H1 (cell line): ENCODE measurements at regions of chr22 and their contacts with region 1.

Region 1: DNA sequence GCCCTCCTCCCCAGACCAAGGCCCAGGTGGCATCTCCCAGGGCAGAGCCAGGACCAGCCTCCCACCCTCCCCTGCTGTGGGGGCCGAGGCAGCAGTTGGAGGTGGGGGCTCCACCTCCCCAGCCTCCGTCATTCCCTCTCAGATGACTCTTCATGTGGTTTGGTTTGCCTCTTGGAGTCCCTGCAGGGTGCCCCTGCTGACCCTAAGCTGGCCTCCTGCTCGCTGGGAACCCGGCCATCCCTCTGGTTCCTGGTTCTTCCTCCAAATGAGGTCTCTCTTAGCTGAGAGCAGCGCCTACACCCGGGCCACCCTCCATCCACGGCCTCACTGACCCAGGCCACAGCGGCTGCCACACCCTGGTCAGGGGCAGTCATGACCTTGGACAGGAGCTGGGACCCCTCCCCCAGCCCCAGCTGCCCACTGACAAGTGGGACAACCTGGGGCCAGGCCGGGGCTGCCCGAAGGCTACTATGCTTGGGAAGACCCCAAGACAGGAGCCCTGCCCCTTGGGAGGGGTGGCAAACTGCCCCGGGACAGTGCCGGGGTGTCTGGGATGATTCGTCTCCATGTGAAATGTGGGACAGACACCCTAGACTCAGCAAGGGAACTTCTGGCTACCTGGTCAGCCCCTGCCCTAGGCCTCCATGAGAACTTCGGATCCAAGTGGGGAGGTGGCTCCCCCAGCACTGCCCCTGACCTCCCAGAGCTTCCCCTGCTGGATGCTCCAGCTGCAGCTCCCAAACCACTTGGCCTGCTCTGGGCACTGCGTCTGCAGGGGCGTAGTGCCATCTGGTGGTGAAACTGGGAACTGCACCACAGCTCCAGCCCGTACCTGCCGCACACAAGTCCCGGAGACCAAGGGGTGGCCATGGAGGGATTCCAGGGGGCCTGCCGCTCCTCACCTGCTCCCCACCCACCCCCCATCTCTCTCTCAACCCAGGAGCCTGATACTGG is 194.5 kb downstream of the IGLL1 start:
- DNase-seq: peak; percentile 80 to 98
- H3K4me3 ChIP-seq: no peak overlapping the region
- H3K27ac ChIP-seq: no peak overlapping the region
- H3K4me1 ChIP-seq: peaks cover 0 to 10% (median 4%) of the 10 kb centered on the region in 4 experiments; a peak in 5 of 7 replicates
- H3K27me3 ChIP-seq: peaks cover 0 to 3% (median 0%) of the 10 kb centered on the region in 4 experiments; a peak in 1 of 7 replicates
- CTCF ChIP-seq: peak; percentile 97 to 99 (median 99)
- EP300 ChIP-seq: no peak
- POLR2A ChIP-seq: no peak
- RAD21 ChIP-seq: peak; percentile 97 to 99

Region 2: GRCh38 chr22:23315341-23315917 is 70.1 kb before region 1 on chr22:
- CTCF ChIA-PET with region 1: interaction called, 25 read pairs
- POLR2A ChIA-PET with region 1: no interaction called
- DNase-seq: peak; percentile 13 to 87
- H3K4me3 ChIP-seq: no peak overlapping the region
- H3K27ac ChIP-seq: no peak overlapping the region
- H3K4me1 ChIP-seq: peaks cover 0 to 2% (median 0%) of the 10 kb centered on the region in 4 experiments; a peak in 1 of 7 replicates
- H3K27me3 ChIP-seq: no peaks in the 10 kb centered on the region
- CTCF ChIP-seq: peak; percentile 30 to 68 (median 59)
- EP300 ChIP-seq: no peak
- POLR2A ChIP-seq: no peak
- RAD21 ChIP-seq: peak; percentile 74 to 79

Region 3: GRCh38 chr22:23322547-23322946 is 63.0 kb before region 1 on chr22:
- CTCF ChIA-PET with region 1: interaction called, 25 read pairs
- POLR2A ChIA-PET with region 1: no interaction called
- DNase-seq: peak in 1 of 2 experiments; percentile 17
- H3K4me3 ChIP-seq: no peak overlapping the region
- H3K27ac ChIP-seq: no peak overlapping the region
- H3K4me1 ChIP-seq: peaks cover 0 to 3% (median 0%) of the 10 kb centered on the region in 4 experiments; a peak in 1 of 7 replicates
- H3K27me3 ChIP-seq: no peaks in the 10 kb centered on the region
- CTCF ChIP-seq: peak; percentile 36 to 57 (median 36)
- EP300 ChIP-seq: no peak
- POLR2A ChIP-seq: no peak
- RAD21 ChIP-seq: peak; percentile 48 to 66

Region 4: GRCh38 chr22:23368656-23369417 is 16.7 kb before region 1 on chr22:
- CTCF ChIA-PET with region 1: interaction called, 13 read pairs
- POLR2A ChIA-PET with region 1: interaction called, 3 read pairs
- DNase-seq: peak in 1 of 2 experiments; percentile 22
- H3K4me3 ChIP-seq: no peak overlapping the region
- H3K27ac ChIP-seq: no peak overlapping the region
- H3K4me1 ChIP-seq: peaks cover 0 to 3% (median 2%) of the 10 kb centered on the region in 4 experiments; a peak in 2 of 7 replicates
- H3K27me3 ChIP-seq: peaks cover 58 to 85% (median 77%) of the 10 kb centered on the region in 4 experiments
- CTCF ChIP-seq: no peak
- EP300 ChIP-seq: no peak
- POLR2A ChIP-seq: no peak
- RAD21 ChIP-seq: no peak

Region 5: GRCh38 chr22:23450434-23450795 is 64.8 kb after region 1 on chr22:
- CTCF ChIA-PET with region 1: no interaction called
- POLR2A ChIA-PET with region 1: no interaction called
- DNase-seq: no peak
- H3K4me3 ChIP-seq: no peak overlapping the region
- H3K27ac ChIP-seq: no peak overlapping the region
- H3K4me1 ChIP-seq: no peaks in the 10 kb centered on the region
- H3K27me3 ChIP-seq: no peaks in the 10 kb centered on the region
- CTCF ChIP-seq: no peak
- EP300 ChIP-seq: no peak
- POLR2A ChIP-seq: no peak
- RAD21 ChIP-seq: no peak

Region 6: DNA sequence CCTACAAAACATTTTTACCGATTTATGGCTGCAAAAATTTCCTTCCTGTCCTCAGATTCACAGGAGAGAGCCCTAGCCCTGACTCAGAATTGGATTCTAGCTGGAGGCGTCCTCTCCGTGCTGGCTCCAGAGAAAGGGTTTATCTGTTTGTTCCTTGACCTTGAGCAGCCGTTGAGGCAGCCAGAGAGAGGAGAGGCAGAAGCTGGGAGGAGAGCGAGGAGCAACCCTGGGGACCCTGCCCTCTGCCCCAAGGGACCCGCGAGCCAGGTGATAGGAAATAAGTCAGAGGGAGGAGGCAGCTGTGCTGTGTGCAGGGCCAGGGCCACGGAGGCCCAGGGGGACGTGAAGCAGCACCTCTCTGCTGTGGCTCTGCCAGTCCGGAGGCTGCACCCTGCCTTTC is 118.9 kb after region 1 on chr22:
- CTCF ChIA-PET with region 1: no interaction called
- POLR2A ChIA-PET with region 1: no interaction called
- DNase-seq: no peak
- H3K4me3 ChIP-seq: no peak overlapping the region
- H3K27ac ChIP-seq: no peak overlapping the region
- H3K4me1 ChIP-seq: peaks cover 0 to 2% (median 1%) of the 10 kb centered on the region in 4 experiments; a peak in 5 of 7 replicates
- H3K27me3 ChIP-seq: peaks cover 0 to 7% (median 1%) of the 10 kb centered on the region in 4 experiments; a peak in 3 of 7 replicates
- CTCF ChIP-seq: no peak
- EP300 ChIP-seq: no peak
- POLR2A ChIP-seq: no peak
- RAD21 ChIP-seq: no peak